ENCODE measurements at regions of chr5 and their contacts with region 1.

Region 1: DNA sequence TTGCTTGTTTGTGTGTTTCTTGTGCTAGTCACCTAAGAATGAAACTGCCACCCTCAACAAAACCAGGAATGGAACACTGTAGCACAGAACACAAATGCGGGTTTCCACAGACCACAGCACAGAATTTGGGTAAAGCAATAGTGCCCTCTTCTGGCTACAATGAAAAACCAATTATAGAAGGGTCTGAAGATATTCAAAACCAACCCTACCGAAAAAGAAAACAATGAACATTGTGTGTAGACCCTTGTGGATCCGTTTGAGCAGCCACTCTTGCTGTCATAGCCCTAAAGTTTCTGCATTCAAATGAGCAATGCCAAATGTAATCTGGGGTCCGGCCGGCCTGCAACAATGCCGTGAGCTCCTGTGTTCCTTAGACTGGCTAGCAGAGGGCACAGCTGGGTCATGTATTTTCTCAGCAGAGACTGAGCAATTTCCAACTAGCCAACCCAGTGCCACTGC is 8.3 kb upstream of the ENC1 start:
- DNase-seq: no peak
- H3K4me3 ChIP-seq: no peak overlapping the region
- H3K27ac ChIP-seq: no peak overlapping the region
- H3K4me1 ChIP-seq: peaks cover 0 to 11% (median 2%) of the 10 kb centered on the region in 4 donors
- H3K27me3 ChIP-seq: no peaks in the 10 kb centered on the region
- CTCF ChIP-seq: peak; percentile 29 to 72 (median 69)
- EP300 ChIP-seq: no peak
- POLR2A ChIP-seq: no peak

Region 2: DNA sequence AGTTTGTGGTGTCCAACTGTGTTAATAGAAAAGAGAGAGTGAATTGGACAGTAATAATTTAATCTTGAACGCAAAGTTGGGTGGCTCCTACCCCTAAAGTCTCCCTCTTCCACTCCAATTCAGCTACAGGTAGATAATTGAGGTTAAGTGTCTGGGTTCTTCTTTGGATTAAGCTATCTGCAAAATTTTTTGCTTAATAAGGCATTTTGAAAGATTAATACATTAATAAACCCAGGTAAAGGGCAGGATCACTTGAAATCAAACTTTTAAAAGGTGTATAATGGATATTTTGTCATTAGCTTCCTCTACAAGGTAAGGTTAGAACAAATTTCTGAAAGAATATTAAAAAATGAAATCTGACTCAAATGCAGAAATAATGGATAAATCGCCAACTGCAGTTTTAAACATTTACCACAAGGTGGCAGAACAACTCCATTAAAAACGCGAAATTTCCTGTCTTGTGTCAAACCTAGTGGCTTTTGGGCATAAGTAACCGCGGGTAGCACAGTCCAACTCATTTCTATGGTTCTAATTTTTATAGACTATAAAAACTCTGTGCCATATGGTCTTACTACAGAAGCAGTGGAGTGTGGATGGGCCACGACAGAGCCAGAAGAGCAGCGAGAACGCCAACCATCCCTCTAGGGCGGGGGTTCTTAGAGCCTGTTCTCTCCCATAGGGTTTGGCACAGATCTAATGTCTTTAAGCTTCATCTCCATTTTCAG is 746.4 kb before region 1 on chr5:
- intact Hi-C with region 1: loop called (anchors 1 kb)
- DNase-seq: no peak
- H3K4me3 ChIP-seq: no peak overlapping the region
- H3K27ac ChIP-seq: no peak overlapping the region
- H3K4me1 ChIP-seq: no peaks in the 10 kb centered on the region
- H3K27me3 ChIP-seq: no peaks in the 10 kb centered on the region
- CTCF ChIP-seq: peak; percentile 63 to 86 (median 77)
- EP300 ChIP-seq: no peak
- POLR2A ChIP-seq: no peak

Region 3: DNA sequence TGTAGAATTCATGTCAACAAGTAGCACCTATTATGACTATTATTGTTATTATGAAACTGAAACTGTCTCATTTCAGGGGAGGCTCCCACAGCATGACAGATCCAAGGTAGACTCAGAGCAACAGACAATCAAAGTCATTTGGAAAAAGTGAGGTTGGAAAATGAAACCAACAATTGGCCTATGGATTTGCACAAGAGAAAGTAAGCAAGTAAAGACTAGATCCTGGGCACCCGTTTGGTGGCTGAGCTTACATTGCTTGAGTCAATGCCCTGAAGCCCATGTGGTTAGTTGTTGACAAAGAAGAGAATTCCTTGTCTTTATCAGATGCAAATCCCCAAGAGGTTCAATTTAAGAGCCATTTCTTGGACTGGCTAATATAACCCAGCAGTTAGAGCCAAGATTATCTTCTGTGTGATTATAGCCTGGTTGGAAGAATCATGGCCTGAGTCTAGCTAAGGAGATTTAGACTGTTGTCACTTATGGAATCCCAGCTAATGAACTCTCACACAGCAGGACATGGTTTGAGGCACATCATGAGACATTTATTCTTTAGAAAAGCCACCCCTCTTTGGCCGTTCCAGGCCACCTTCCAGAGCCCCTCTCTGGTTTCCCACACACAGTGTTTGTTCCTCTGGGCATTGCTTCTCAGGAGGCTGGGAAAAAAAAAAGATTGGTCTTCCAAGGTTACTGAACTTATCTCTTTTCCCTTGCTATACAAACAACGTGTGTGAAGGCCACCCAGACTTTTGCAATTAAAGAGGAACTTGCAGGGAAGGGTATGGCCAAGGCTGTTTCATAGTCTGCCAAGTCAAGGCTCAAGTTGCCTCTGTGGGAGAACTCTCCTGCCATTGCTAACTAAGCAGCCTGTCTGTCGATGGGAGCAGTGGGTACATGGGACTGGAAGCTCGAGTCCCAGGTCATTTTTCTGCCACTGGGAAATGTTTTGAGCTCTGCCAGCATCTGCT is 407.8 kb before region 1 on chr5:
- intact Hi-C with region 1: no loop called
- DNase-seq: no peak
- H3K4me3 ChIP-seq: no peak overlapping the region
- H3K27ac ChIP-seq: no peak overlapping the region
- H3K4me1 ChIP-seq: no peaks in the 10 kb centered on the region
- H3K27me3 ChIP-seq: no peaks in the 10 kb centered on the region
- CTCF ChIP-seq: no peak
- EP300 ChIP-seq: no peak
- POLR2A ChIP-seq: no peak

Measured in sigmoid colon (tissue), 7 donors.